T-cell (primary cell): ENCODE measurements at regions of chr14 and their contacts with region 1.

Region 1: DNA sequence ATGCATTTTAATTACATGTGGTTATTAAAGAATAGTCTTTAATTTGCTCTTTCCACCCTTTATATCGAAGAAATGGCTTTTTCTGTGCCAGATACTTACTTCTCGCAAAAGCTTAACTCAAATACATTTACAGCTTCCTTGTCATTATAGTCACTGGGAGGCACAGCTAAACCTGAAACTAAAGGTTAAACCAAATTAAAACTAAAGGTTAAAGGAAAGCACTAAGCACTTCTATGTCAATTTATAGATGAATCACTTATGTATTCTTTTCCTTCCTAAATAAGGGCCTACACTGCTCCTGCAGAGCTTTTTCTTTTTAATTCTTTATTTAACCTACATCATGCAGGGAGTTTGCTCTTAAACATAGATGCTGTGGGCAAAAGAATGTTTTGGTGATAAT is 9.1 kb downstream of the C14orf93 start:
- DNase-seq: no peak
- ATAC-seq: no peak
- H3K4me3 ChIP-seq: no peak overlapping the region
- H3K4me3 Mint-ChIP-seq: no peak overlapping the region
- H3K27ac ChIP-seq: no peak overlapping the region
- H3K27ac Mint-ChIP-seq: no peak overlapping the region
- H3K4me1 ChIP-seq: no peaks in the 10 kb centered on the region
- H3K4me1 Mint-ChIP-seq: peaks cover under 1 to 6% (median 2%) of the 10 kb centered on the region in 3 donors
- H3K27me3 ChIP-seq: no peaks in the 10 kb centered on the region
- H3K27me3 Mint-ChIP-seq: no peaks in the 10 kb centered on the region

Region 2: GRCh38 chr14:22464422-22465142 is 536.3 kb before region 1 on chr14:
- CTCF ChIA-PET with region 1: no interaction called
- POLR2A ChIA-PET with region 1: no interaction called
- DNase-seq: no peak
- ATAC-seq: no peak
- H3K4me3 ChIP-seq: no peak overlapping the region
- H3K4me3 Mint-ChIP-seq: no peak overlapping the region
- H3K27ac ChIP-seq: no peak overlapping the region
- H3K27ac Mint-ChIP-seq: peak overlapping the region; percentile 8 to 11
- H3K4me1 ChIP-seq: no peaks in the 10 kb centered on the region
- H3K4me1 Mint-ChIP-seq: peaks cover 0 to 16% (median 0%) of the 10 kb centered on the region in 3 donors
- H3K27me3 ChIP-seq: no peaks in the 10 kb centered on the region
- H3K27me3 Mint-ChIP-seq: no peaks in the 10 kb centered on the region

Region 3: GRCh38 chr14:23040100-23040499 is 39.2 kb after region 1 on chr14:
- CTCF ChIA-PET with region 1: interaction called in 1 of 2 experiments, 10 read pairs
- POLR2A ChIA-PET with region 1: interaction called, 3 to 17 read pairs
- DNase-seq: no peak
- ATAC-seq: no peak
- H3K4me3 ChIP-seq: no peak overlapping the region
- H3K4me3 Mint-ChIP-seq: no peak overlapping the region
- H3K27ac ChIP-seq: no peak overlapping the region
- H3K27ac Mint-ChIP-seq: no peak overlapping the region
- H3K4me1 ChIP-seq: peaks cover 0 to 2% of the 10 kb centered on the region in 2 experiments
- H3K4me1 Mint-ChIP-seq: peaks cover 4 to 8% (median 8%) of the 10 kb centered on the region in 3 donors
- H3K27me3 ChIP-seq: peaks cover 0 to 10% of the 10 kb centered on the region in 2 experiments
- H3K27me3 Mint-ChIP-seq: no peaks in the 10 kb centered on the region